H1 (cell line): ENCODE measurements at regions of chr7 and their contacts with region 1.

Region 1: DNA sequence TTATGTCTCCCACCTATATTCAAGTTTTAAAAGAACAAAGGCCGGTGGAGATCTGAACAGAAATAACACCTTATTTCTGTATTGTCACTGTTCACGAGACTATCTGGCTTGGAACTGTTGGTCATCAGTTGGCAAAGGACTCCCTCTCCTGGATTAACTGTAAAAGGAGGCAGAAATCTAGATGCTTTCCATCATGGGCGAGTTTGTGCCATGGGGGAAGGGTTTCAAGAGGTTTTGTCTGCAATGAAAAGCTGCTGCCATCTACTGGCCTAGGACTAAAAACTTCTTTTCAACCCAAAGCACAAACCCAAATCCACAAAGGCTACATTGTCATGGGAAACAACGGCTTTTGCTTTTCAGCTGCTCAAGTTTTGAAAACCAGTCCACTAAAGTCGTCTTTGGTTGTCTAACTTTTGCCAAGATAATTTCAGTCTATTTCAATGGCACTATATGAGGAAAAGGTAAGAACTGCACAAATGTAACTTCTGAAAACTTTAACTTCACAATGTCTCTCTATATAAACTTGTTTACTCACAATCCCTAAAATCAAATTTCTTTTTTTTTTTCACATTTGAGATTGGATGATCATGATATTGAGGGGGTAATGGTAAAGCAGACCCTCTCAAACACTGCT is 196.8 kb downstream of the SKAP2 start:
- DNase-seq: peak in 1 of 2 experiments; percentile 81
- H3K4me3 ChIP-seq: no peak overlapping the region
- H3K27ac ChIP-seq: no peak overlapping the region
- H3K4me1 ChIP-seq: no peaks in the 10 kb centered on the region
- H3K27me3 ChIP-seq: no peaks in the 10 kb centered on the region
- CTCF ChIP-seq: peak in 2 of 3 experiments; percentile 95 to 98; a peak in 3 of 4 replicates
- EP300 ChIP-seq: 0 out of 3 replicates have a peak, but pooled peaks of 1 of the 2 experiments have one; percentile 51
- POLR2A ChIP-seq: no peak
- RAD21 ChIP-seq: peak; percentile 100

Region 2: DNA sequence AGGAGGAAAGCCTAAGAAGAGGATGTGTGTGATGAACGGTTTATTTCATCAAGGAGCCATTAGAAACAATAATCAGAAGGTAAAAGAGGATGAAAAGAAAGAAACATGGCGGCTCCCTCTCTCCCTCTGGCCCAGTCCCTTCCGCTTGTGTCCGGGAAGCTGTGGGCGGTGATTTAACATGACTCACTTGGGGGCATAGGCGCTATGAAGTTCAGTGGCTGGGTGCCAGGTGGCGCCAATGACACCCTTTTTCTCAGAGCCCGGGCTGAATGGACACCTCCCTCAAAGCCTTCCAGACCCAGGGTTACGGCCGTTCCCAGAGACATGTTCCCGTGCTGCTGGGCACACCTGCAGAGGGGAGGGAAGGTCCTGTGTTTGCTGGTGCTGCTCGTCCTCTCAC is 47.3 kb before region 1 on chr7:
- CTCF ChIA-PET with region 1: interaction called, 25 read pairs
- POLR2A ChIA-PET with region 1: no interaction called
- DNase-seq: peak; percentile 53 to 74
- H3K4me3 ChIP-seq: no peak overlapping the region
- H3K27ac ChIP-seq: no peak overlapping the region
- H3K4me1 ChIP-seq: peaks cover 0 to 5% (median 0%) of the 10 kb centered on the region in 4 experiments; a peak in 5 of 7 replicates
- H3K27me3 ChIP-seq: no peaks in the 10 kb centered on the region; a peak in 1 of 7 replicates
- CTCF ChIP-seq: peak; percentile 47 to 65 (median 63)
- EP300 ChIP-seq: no peak
- POLR2A ChIP-seq: no peak
- RAD21 ChIP-seq: peak; percentile 46 to 61

Region 3: GRCh38 chr7:26993816-26994810 is 326.5 kb after region 1 on chr7:
- CTCF ChIA-PET with region 1: no interaction called
- POLR2A ChIA-PET with region 1: no interaction called
- DNase-seq: no peak
- H3K4me3 ChIP-seq: no peak overlapping the region
- H3K27ac ChIP-seq: no peak overlapping the region
- H3K4me1 ChIP-seq: peaks cover 0 to 2% (median 0%) of the 10 kb centered on the region in 4 experiments; a peak in 2 of 7 replicates
- H3K27me3 ChIP-seq: peaks cover 3 to 37% (median 17%) of the 10 kb centered on the region in 4 experiments
- CTCF ChIP-seq: no peak
- EP300 ChIP-seq: no peak
- POLR2A ChIP-seq: no peak
- RAD21 ChIP-seq: no peak